ENCODE measurements at regions of chr16 and their contacts with region 1.

Region 1: GRCh38 chr16:62256406-62256805 is 220.2 kb upstream of the CDH8 start:
- DNase-seq: no peak
- H3K4me3 Mint-ChIP-seq: no peak overlapping the region
- H3K27ac Mint-ChIP-seq: no peak overlapping the region
- H3K4me1 Mint-ChIP-seq: no peaks in the 10 kb centered on the region
- H3K27me3 Mint-ChIP-seq: no peaks in the 10 kb centered on the region
- CTCF ChIP-seq: no peak

Region 2: DNA sequence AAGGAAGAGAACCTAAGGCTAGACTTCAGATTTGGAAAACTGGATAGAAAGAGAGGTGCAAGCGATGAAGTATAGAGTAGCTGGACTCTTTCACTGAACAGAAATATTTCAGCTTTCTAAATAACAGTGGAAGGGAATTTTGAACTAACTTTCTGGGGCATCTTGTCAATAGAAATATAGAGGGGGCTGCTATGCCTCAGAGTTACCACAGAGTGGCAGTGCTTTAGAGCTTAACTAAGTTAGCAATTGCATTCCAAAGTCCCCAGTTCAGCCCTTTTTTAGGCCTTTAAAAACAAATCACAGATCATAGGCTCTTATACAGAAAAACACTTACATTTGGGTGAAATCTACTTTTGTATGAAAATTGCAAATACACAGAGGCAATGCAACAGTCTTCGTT is 66.0 kb before region 1 on chr16:
- CTCF ChIA-PET with region 1: interaction called, 14 read pairs
- POLR2A ChIA-PET with region 1: no interaction called
- intact Hi-C with region 1: loop called (anchors 2 kb)
- DNase-seq: peak; percentile 8
- H3K4me3 Mint-ChIP-seq: no peak overlapping the region
- H3K27ac Mint-ChIP-seq: no peak overlapping the region
- H3K4me1 Mint-ChIP-seq: no peaks in the 10 kb centered on the region
- H3K27me3 Mint-ChIP-seq: peaks cover 72% of the 10 kb centered on the region
- CTCF ChIP-seq: peak; percentile 49

Region 3: GRCh38 chr16:62225697-62226280 is 30.6 kb before region 1 on chr16:
- CTCF ChIA-PET with region 1: interaction called, 13 read pairs
- POLR2A ChIA-PET with region 1: interaction called, 5 read pairs
- intact Hi-C with region 1: no loop called
- DNase-seq: peak; percentile 81
- H3K4me3 Mint-ChIP-seq: peak overlapping the region; percentile 19
- H3K27ac Mint-ChIP-seq: no peak overlapping the region
- H3K4me1 Mint-ChIP-seq: no peaks in the 10 kb centered on the region
- H3K27me3 Mint-ChIP-seq: no peaks in the 10 kb centered on the region
- CTCF ChIP-seq: peak; percentile 29

Region 4: GRCh38 chr16:62353354-62353753 is 96.9 kb after region 1 on chr16:
- CTCF ChIA-PET with region 1: no interaction called
- POLR2A ChIA-PET with region 1: no interaction called
- intact Hi-C with region 1: no loop called
- DNase-seq: no peak
- H3K4me3 Mint-ChIP-seq: no peak overlapping the region
- H3K27ac Mint-ChIP-seq: no peak overlapping the region
- H3K4me1 Mint-ChIP-seq: no peaks in the 10 kb centered on the region
- H3K27me3 Mint-ChIP-seq: no peaks in the 10 kb centered on the region
- CTCF ChIP-seq: no peak